ENCODE measurements at regions of chr5 and their contacts with region 1.

Region 1: DNA sequence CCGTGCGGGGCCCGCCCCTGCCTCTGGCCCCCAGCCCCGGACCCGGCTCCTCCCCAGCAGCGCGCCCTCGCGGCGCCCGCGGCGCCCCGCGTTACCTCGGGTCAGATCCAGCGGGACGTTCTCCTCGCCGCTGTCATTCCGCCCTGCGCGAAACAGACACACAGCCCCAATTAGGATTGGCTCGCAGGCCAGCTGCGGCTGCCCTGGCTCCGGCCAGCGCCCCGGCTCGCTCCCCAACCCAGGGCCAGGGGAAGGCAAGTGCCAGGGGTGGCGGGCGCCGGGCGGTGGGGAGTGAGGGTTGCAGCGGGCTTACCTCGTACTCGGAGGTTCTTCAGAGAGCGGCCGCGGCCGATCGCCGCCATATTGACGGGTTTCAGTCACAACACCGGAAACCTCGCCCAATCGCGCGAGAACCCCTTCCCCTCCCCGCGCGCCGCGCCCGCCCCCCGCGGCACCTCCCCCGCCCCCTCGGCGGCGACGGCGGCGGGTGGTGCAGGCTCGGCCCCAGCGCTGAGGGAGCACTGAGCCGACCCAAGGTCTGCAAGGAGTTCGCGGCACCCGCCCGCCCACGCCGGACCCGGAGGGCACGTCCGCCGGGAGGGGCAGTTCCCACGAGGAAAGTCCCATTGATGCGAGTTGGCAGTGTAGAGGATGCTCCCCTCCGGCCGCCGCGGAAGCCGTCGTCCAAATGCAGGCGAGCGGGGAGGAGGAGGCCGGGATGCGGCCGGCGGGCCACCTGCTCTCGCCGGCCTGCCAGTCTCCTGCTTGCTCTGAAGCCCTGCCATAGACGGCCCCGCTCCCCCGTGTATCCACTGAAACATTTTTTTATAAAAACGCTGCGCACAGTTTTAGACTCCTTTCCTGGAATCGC is at the start of gene RICTOR:
- DNase-seq: peak; percentile 93
- ATAC-seq: peak; percentile 75
- H3K4me3 ChIP-seq: peak within 1 kb of the TSS; percentile 94
- H3K27ac ChIP-seq: peak within 1 kb of the TSS; percentile 87
- H3K4me1 ChIP-seq: peaks cover 40% of the 10 kb centered on the region
- H3K27me3 ChIP-seq: no peaks in the 10 kb centered on the region
- CTCF ChIP-seq: no peak
- total RNA-seq, gene RICTOR: 24.5 and 28.1 TPM in 2 replicates

Region 2: GRCh38 chr5:38994324-38994927 is 79.8 kb before region 1 on chr5:
- CTCF ChIA-PET with region 1: no interaction called
- POLR2A ChIA-PET with region 1: no interaction called
- intact Hi-C with region 1: loop called (anchors 2 kb)
- DNase-seq: peak; percentile 89
- ATAC-seq: peak; percentile 78
- H3K4me3 ChIP-seq: no peak overlapping the region
- H3K27ac ChIP-seq: no peak overlapping the region
- H3K4me1 ChIP-seq: no peaks in the 10 kb centered on the region
- H3K27me3 ChIP-seq: no peaks in the 10 kb centered on the region
- CTCF ChIP-seq: peak; percentile 82

Region 3: DNA sequence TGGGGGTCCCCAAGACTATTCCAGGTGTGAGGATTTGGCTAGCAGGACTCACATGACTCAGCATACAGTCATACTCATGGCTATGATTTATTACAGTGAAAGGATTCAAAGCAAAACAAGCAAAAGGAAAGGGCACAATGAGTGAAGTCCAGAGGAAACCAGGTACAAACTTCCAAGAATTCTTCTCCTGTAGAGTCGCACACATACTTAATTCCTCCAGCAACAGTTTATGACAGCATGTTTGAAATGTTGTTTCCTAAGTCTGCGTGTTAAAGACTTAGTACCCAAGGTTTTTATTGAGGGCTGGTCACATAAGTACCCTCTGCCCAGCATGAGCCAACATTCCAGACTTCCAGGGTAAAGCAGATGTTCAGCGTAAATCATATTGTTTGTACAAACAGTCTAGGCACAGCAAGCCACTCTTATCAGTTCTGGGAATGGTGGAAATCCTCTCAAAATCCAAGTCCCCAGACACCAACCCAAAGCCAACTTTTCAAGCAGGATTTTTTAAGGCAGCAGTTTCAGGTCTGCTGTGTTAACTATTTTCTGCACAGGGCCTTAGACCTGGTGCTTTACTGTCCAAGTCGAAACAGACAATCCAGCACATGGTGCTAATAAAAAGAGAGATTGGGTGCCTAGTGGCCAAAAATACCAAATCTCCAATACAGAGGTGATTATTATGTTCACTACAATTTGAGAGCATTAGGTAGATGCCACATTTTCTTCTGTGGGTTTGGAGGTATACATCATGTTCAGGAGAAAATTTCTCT is 18.5 kb after region 1 on chr5:
- CTCF ChIA-PET with region 1: no interaction called
- POLR2A ChIA-PET with region 1: no interaction called
- intact Hi-C with region 1: loop called (anchors 2 kb)
- DNase-seq: peak; percentile 88
- ATAC-seq: peak; percentile 86
- H3K4me3 ChIP-seq: peak overlapping the region; percentile 27
- H3K27ac ChIP-seq: peak overlapping the region; percentile 89
- H3K4me1 ChIP-seq: peaks cover 26% of the 10 kb centered on the region
- H3K27me3 ChIP-seq: no peaks in the 10 kb centered on the region
- CTCF ChIP-seq: no peak

Region 4: DNA sequence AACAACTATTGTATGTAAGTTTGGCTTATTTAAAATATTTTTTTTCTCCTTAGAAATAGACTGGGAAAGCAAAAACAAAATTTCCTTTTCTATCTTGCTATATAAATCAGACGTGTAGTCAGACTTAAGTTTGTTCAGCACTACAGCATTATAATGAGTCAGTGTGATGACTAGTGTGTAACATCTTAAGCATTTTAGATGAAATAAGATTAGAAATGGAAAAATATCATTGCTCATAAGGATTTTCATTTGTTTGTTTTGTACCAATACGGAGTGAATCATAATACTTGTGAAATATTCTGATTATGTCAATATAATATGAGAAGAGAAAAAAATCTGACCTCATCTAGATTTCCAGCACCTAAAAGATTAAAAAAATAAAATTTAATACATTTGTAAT is 64.6 kb after region 1 on chr5:
- CTCF ChIA-PET with region 1: no interaction called
- POLR2A ChIA-PET with region 1: no interaction called
- intact Hi-C with region 1: loop called (anchors 2 kb)
- DNase-seq: peak; percentile 97
- ATAC-seq: peak; percentile 86
- H3K4me3 ChIP-seq: 0 out of 2 replicates have a peak overlapping the region, but pooled peaks have one; percentile 11
- H3K27ac ChIP-seq: peak overlapping the region; percentile 94
- H3K4me1 ChIP-seq: peaks cover 42% of the 10 kb centered on the region
- H3K27me3 ChIP-seq: no peaks in the 10 kb centered on the region
- CTCF ChIP-seq: no peak

Region 5: GRCh38 chr5:39217365-39218281 is 143.4 kb after region 1 on chr5:
- CTCF ChIA-PET with region 1: no interaction called
- POLR2A ChIA-PET with region 1: no interaction called
- intact Hi-C with region 1: loop called (anchors 5 kb)
- DNase-seq: peak; percentile 95
- ATAC-seq: peak; percentile 39; the same call in 1 of the 2 replicates
- H3K4me3 ChIP-seq: no peak overlapping the region
- H3K27ac ChIP-seq: no peak overlapping the region
- H3K4me1 ChIP-seq: peaks cover 25% of the 10 kb centered on the region
- H3K27me3 ChIP-seq: no peaks in the 10 kb centered on the region
- CTCF ChIP-seq: peak; percentile 99

Region 6: GRCh38 chr5:39558541-39558940 is 484.3 kb after region 1 on chr5:
- CTCF ChIA-PET with region 1: no interaction called
- POLR2A ChIA-PET with region 1: no interaction called
- intact Hi-C with region 1: no loop called
- DNase-seq: no peak
- ATAC-seq: no peak
- H3K4me3 ChIP-seq: no peak overlapping the region
- H3K27ac ChIP-seq: no peak overlapping the region
- H3K4me1 ChIP-seq: no peaks in the 10 kb centered on the region
- H3K27me3 ChIP-seq: no peaks in the 10 kb centered on the region
- CTCF ChIP-seq: no peak